ENCODE measurements at regions of chr1 and their contacts with region 1.

Region 1: DNA sequence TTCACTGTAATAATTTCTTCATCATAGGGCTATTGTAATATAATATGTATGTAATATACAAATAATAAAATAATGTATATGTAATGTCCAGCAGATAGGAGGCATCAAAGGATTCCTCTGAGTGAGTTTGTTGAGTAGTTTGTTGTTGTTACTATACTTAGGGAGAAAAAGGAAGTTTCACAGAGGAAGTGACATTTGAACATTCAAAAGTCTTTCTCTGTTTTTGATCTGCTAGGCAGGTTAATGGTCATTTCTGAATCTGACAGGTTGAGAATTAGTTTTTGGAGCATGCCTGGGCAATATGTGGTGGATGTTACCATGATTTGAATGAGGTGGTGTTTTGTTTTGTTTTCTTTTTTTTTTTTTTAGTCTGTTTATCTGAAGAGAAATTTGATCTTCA is 102.1 kb downstream of the NRDC start:
- DNase-seq: peak; percentile 26
- ATAC-seq: peak; percentile 71
- H3K4me3 ChIP-seq: no peak overlapping the region
- H3K27ac ChIP-seq: peak overlapping the region; percentile 48; the same call in 1 of the 2 replicates
- H3K4me1 ChIP-seq: peaks cover 11% of the 10 kb centered on the region
- H3K27me3 ChIP-seq: no peaks in the 10 kb centered on the region
- CTCF ChIP-seq: no peak
- EP300 ChIP-seq: no peak
- POLR2A ChIP-seq: no peak
- RAD21 ChIP-seq: no peak

Region 2: DNA sequence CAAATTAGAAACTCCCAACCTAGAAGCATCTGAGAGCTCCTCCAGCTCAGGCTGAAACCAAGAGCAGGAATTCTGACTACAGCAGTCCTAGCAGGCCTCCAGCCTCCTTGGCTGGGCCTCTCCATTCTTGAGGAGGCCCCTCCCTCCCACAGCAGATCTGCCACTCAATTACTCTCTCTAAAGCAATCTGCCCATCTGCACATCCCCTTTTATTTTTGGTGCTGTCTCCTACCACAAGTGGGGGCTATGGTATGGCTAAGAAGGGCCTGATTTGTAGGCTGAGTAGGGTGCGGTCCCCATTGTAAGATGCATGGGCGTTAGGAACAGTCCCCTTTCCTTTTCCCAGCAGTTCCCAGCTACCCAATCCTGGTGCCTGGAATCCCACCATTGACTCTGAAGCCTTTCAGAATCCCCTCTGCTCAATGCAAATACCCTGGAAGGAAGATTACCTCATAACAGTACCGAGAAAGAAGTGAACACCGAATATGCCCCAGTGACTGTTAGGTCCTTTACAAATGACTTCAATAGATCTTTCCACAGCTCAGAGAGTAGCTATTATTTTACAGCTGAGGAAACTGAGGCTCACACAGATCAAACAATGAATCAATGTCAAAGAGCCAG is 434.4 kb before region 1 on chr1:
- CTCF ChIA-PET with region 1: interaction called, 3 read pairs
- POLR2A ChIA-PET with region 1: no interaction called
- RAD21 ChIA-PET with region 1: no interaction called
- SMC1A ChIA-PET with region 1: no interaction called
- in situ Hi-C with region 1: no loop called
- intact Hi-C with region 1: loop called (anchors 10 kb)
- DNase-seq: peak; percentile 11
- ATAC-seq: peak; percentile 69
- H3K4me3 ChIP-seq: no peak overlapping the region
- H3K27ac ChIP-seq: no peak overlapping the region
- H3K4me1 ChIP-seq: peaks cover 18% of the 10 kb centered on the region
- H3K27me3 ChIP-seq: peaks cover 0 to 5% of the 10 kb centered on the region in 2 experiments; a peak in 3 of 4 replicates
- CTCF ChIP-seq: peak; percentile 23 to 42 (median 38); a peak in 5 of 6 replicates
- EP300 ChIP-seq: no peak
- POLR2A ChIP-seq: no peak
- RAD21 ChIP-seq: peak; percentile 56